Calu3 (cell line): ENCODE measurements at regions of chr2 and their contacts with region 1.

Region 1: GRCh38 chr2:148020111-148021058 is at the start of gene ORC4:
- DNase-seq: peak; percentile 97
- H3K4me3 Mint-ChIP-seq: peak within 1 kb of the TSS; percentile 98
- H3K27ac Mint-ChIP-seq: peak within 1 kb of the TSS; percentile 90
- H3K4me1 Mint-ChIP-seq: peaks cover 34% of the 10 kb centered on the region
- H3K27me3 Mint-ChIP-seq: no peaks in the 10 kb centered on the region
- CTCF ChIP-seq: no peak
- total RNA-seq, gene ORC4: 59.2 and 66.2 TPM in 2 replicates

Region 2: GRCh38 chr2:148031152-148031551 is 10.8 kb after region 1 on chr2:
- CTCF ChIA-PET with region 1: interaction called, 10 read pairs
- intact Hi-C with region 1: no loop called
- DNase-seq: no peak
- H3K4me3 Mint-ChIP-seq: no peak overlapping the region
- H3K27ac Mint-ChIP-seq: no peak overlapping the region
- H3K4me1 Mint-ChIP-seq: no peaks in the 10 kb centered on the region
- H3K27me3 Mint-ChIP-seq: no peaks in the 10 kb centered on the region
- CTCF ChIP-seq: no peak